A549 (cell line): ENCODE measurements at regions of chr18 and their contacts with region 1.

Region 1: GRCh38 chr18:63322841-63323634 is 3.5 kb upstream of the BCL2 start:
- DNase-seq: peak; percentile 39 to 68
- ATAC-seq: peak in 1 of 2 experiments; percentile 70; a peak in 3 of 6 replicates
- H3K4me3 ChIP-seq: no peak overlapping the region
- H3K27ac ChIP-seq: no peak overlapping the region
- H3K4me1 ChIP-seq: peaks cover 15% of the 10 kb centered on the region; the same call in 1 of the 3 replicates
- CTCF ChIP-seq: peak; percentile 66
- EP300 ChIP-seq: no peak
- POLR2A ChIP-seq: no peak
- RAD21 ChIP-seq: peak; percentile 65 to 67

Region 2: GRCh38 chr18:63016270-63016669 is 306.8 kb before region 1 on chr18:
- CTCF ChIA-PET with region 1: interaction called, 77 read pairs
- POLR2A ChIA-PET with region 1: no interaction called
- DNase-seq: peak; percentile 36 to 41
- ATAC-seq: peak; percentile 47 to 73; a peak in 3 of 6 replicates
- H3K4me3 ChIP-seq: no peak overlapping the region
- H3K27ac ChIP-seq: no peak overlapping the region
- H3K4me1 ChIP-seq: no peaks in the 10 kb centered on the region
- CTCF ChIP-seq: peak; percentile 66
- EP300 ChIP-seq: no peak
- POLR2A ChIP-seq: no peak
- RAD21 ChIP-seq: peak; percentile 76 to 83

Region 3: DNA sequence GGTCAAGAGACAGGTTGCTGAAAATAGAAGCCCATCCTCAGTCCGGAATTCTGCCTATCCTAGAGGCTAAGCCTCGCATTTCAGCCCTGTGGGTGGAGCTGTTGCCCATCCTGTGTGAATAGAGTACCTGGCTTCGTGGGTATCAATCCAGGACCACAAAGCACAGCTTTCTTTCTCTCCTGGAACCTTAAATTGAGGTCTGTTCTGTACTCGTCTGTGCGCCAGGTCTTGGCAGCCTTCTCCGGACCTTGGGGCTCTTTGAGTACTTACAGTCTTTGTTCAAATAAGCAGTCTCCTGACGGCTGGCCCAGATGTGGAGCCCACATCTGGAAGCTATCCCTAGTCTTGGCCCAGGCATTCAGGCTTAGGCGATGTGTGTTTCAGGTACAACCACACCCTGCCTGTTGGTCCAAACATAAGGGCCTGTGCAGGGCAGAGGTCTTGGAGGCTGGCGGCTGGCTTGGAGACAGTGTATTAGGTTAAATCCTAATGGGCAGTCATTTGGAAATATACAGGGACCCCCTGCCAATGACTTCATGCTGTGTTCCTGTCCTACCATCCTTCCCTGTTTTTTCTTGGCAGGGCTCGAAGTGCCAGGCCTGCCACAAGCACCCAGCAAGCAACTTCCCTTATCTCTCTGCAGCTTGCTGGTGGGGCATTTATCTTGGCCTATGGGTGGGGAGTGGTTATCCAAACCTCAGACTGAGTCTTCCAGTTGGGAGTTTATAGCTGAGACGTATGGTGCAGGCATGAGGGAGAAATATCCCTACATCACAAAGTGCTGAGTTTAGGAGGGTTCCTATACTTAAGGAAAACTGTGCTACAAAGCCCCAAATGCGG is 297.6 kb before region 1 on chr18:
- CTCF ChIA-PET with region 1: interaction called, 77 read pairs
- POLR2A ChIA-PET with region 1: no interaction called
- DNase-seq: peak in 1 of 2 experiments; percentile 5
- ATAC-seq: peak; percentile 39 to 78; a peak in 4 of 6 replicates
- H3K4me3 ChIP-seq: no peak overlapping the region
- H3K27ac ChIP-seq: no peak overlapping the region
- H3K4me1 ChIP-seq: no peaks in the 10 kb centered on the region
- CTCF ChIP-seq: no peak
- EP300 ChIP-seq: no peak
- POLR2A ChIP-seq: no peak
- RAD21 ChIP-seq: peak; percentile 30 to 38; a peak in 2 of 5 replicates

Region 4: GRCh38 chr18:63131106-63131958 is 191.7 kb before region 1 on chr18:
- CTCF ChIA-PET with region 1: interaction called, 26 read pairs
- POLR2A ChIA-PET with region 1: no interaction called
- DNase-seq: peak; percentile 16 to 22
- ATAC-seq: peak in 1 of 2 experiments; percentile 72; a peak in 3 of 6 replicates
- H3K4me3 ChIP-seq: no peak overlapping the region
- H3K27ac ChIP-seq: no peak overlapping the region
- H3K4me1 ChIP-seq: no peaks in the 10 kb centered on the region
- CTCF ChIP-seq: peak; percentile 56
- EP300 ChIP-seq: no peak
- POLR2A ChIP-seq: no peak
- RAD21 ChIP-seq: peak; percentile 41 to 45

Region 5: DNA sequence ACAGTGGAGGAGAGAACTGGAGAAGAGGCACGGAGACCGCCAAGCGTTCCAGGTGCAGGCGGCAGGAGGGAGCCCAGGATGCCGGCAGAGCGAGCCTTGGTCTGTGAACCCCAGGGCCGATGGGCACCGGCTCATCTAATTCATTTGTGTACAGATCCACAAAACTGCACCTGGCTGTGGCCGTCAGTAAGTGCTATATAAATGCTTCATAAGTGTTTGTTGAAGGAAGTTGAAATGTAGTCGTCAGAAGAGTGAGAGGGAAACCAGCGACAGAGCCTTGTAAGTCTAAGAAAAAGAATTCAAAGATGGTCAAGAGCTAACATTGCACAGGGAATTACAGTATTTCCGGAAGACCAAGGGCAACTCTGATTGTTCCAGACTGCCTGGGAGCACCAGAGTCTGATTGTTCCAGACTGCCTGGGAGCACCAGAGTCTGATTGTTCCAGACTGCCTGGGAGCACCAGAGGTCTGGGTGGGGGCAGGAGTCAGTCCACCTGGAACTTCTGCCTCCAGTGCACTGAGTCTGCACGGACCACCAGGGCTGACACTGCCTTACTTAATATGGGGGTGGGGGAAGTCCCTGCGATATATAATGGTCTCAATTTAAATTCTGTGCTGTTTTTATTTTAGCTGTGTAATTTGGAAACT is 115.8 kb before region 1 on chr18:
- CTCF ChIA-PET with region 1: no interaction called
- POLR2A ChIA-PET with region 1: no interaction called
- DNase-seq: no peak
- ATAC-seq: no peak
- H3K4me3 ChIP-seq: no peak overlapping the region
- H3K27ac ChIP-seq: no peak overlapping the region
- H3K4me1 ChIP-seq: no peaks in the 10 kb centered on the region
- CTCF ChIP-seq: no peak
- EP300 ChIP-seq: no peak
- POLR2A ChIP-seq: no peak
- RAD21 ChIP-seq: no peak

Region 6: DNA sequence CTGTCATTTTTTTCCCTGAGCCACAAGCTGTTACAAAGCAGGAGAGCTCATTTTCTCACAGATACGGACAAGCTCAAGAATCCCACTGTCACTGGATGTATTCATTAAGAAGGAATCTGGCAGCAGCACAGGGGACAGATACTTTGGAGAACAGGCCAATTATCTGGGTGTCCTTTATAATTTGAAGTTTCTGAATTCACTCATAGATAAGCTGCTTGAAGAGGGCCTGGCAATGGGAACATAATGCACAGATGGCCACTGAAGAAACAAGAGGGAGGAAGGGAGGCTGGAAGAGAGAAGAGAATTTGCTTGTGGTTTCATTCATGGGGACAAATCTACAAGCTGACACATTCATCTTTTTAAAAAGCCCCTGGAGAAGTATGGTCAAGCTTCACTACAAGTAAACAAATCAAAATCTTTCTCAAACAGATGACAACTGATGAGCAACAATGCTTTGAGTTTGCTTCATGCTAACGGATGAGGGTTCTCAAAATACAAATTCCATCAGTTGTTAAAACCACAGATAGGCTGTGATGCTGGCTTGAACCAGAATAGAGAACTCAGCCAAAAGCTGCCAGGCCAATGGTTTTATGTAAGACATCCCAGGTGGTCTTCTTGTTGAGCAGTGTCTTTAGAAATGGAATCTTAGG is 15.4 kb before region 1 on chr18:
- CTCF ChIA-PET with region 1: interaction called, 10 read pairs
- POLR2A ChIA-PET with region 1: no interaction called
- DNase-seq: no peak
- ATAC-seq: no peak
- H3K4me3 ChIP-seq: no peak overlapping the region
- H3K27ac ChIP-seq: no peak overlapping the region
- H3K4me1 ChIP-seq: no peaks in the 10 kb centered on the region
- CTCF ChIP-seq: no peak
- EP300 ChIP-seq: no peak
- POLR2A ChIP-seq: no peak
- RAD21 ChIP-seq: no peak

Region 7: GRCh38 chr18:63336352-63337099 is 13.5 kb after region 1 on chr18:
- CTCF ChIA-PET with region 1: interaction called, 10 read pairs
- POLR2A ChIA-PET with region 1: no interaction called
- DNase-seq: peak in 1 of 2 experiments; percentile 11
- ATAC-seq: no peak
- H3K4me3 ChIP-seq: no peak overlapping the region
- H3K27ac ChIP-seq: peak overlapping the region in 1 of 2 experiments; percentile 38; a peak in 1 of 6 replicates
- H3K4me1 ChIP-seq: peaks cover 10% of the 10 kb centered on the region
- CTCF ChIP-seq: no peak
- EP300 ChIP-seq: no peak
- POLR2A ChIP-seq: no peak
- RAD21 ChIP-seq: no peak

Region 8: DNA sequence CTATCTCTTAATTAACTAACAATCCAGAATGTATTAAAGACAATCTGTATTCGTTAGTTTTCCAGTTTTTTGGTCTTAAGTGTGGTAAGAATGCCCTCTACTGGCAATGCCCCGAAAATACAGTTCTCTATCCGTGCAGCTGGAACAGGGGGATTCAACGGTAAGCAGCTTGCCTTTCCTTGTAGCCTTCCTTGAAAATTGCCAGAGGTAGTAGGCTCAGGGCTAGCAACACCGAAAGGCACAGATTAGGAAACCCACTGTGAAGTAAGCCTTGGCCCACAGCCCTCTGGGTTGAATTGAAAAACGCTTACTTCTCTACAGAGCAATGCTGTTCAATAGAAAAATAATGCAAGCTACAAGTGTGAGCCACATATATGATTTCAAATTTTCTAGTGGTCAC is 116.3 kb after region 1 on chr18:
- CTCF ChIA-PET with region 1: interaction called, 10 read pairs
- POLR2A ChIA-PET with region 1: no interaction called
- DNase-seq: peak; percentile 36 to 68
- ATAC-seq: peak; percentile 47 to 81; a peak in 4 of 6 replicates
- H3K4me3 ChIP-seq: no peak overlapping the region
- H3K27ac ChIP-seq: no peak overlapping the region
- H3K4me1 ChIP-seq: no peaks in the 10 kb centered on the region
- CTCF ChIP-seq: peak; percentile 70
- EP300 ChIP-seq: no peak
- POLR2A ChIP-seq: no peak
- RAD21 ChIP-seq: peak; percentile 72 to 75